ENCODE measurements at regions of chrX and their contacts with region 1.

Region 1: GRCh38 chrX:43969504-43970501 is 3.4 kb downstream of the NDP start:
- DNase-seq: no peak
- H3K4me3 ChIP-seq: no peak overlapping the region
- H3K27ac ChIP-seq: peak overlapping the region in 1 of 2 experiments; percentile 79; a peak in 2 of 4 replicates
- H3K4me1 ChIP-seq: no peaks in the 10 kb centered on the region; a peak in 1 of 4 replicates
- H3K27me3 ChIP-seq: peaks cover 5% of the 10 kb centered on the region; the same call in 1 of the 2 replicates
- CTCF ChIP-seq: no peak
- EP300 ChIP-seq: no peak
- RAD21 ChIP-seq: no peak

Region 2: DNA sequence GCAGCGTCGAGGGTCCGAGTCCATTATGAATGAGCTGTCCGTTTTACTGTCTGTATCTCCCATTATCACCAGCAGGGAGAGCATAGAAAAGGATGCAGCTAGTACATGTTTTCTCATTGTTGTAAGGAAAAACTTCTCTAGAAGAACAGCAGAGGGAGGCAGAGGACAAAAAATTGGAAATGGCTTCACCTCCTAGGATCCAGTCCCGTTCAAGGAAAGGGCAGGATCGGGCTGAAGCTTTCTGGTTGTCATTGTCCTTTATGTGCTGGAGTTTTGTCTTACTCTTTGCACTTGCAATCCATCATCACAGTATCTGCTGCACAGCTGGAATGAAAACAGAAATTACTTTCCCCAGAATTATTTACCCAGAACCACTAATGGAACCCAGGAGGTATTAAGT is 11.3 kb before region 1 on chrX:
- CTCF ChIA-PET with region 1: interaction called, 24 read pairs
- POLR2A ChIA-PET with region 1: no interaction called
- DNase-seq: peak; percentile 64
- H3K4me3 ChIP-seq: no peak overlapping the region
- H3K27ac ChIP-seq: no peak overlapping the region
- H3K4me1 ChIP-seq: no peaks in the 10 kb centered on the region; a peak in 1 of 4 replicates
- H3K27me3 ChIP-seq: no peaks in the 10 kb centered on the region
- CTCF ChIP-seq: peak; percentile 86
- EP300 ChIP-seq: no peak
- RAD21 ChIP-seq: peak; percentile 94